ENCODE measurements at regions of chr1 and their contacts with region 1.

Region 1: DNA sequence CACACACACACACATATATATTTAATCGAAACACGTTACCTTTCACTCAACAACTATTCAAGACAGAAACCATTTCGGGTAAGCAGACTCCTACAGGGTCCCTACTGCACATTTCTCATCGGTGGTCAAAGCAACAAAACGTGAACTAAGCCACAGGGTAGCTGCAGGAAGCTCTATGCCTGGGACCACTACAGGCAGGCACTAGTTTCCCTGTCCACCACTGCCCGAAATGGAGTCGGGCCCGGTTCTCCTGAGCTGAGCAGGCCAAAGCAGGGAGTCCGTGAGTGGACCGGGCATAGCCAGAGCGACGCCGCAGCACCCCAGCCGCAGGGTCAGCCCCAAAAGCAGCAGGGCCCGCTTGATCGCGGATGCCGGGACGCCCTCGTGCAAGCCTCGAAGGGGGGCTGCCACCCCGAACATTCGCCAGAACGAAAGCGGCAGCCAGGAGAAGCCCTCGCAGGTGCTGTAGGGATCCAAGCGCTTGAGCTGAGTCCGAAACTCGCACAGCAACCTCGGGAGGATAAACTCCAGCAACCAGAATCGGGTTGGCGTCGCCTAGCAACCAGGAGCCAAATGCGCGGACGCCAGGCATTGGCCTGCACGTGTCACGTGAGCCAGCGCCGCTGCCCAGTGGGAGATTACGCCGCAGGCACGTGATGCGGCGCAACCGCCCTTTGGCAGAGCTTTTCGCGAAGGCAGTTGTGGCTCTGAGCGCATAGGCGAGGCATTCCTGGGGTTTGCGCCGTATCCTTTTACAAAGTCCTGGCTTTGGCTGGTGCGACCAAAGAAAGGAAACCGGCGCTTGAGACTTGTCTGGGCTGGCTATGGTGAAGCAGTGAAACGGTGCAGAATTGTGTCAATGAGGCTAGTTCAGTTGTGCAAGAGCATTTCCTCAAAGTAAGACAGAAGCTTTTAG is 13.9 kb upstream of the DDI2 start:
- DNase-seq: peak; percentile 97 to 98
- H3K4me3 ChIP-seq: peak overlapping the region; percentile 64 to 74
- H3K27ac ChIP-seq: peak overlapping the region; percentile 76 to 78
- H3K4me1 ChIP-seq: peaks cover 0 to 14% (median 5%) of the 10 kb centered on the region in 4 donors
- H3K27me3 ChIP-seq: no peaks in the 10 kb centered on the region
- CTCF ChIP-seq: peak in 1 of 2 experiments; percentile 23

Region 2: DNA sequence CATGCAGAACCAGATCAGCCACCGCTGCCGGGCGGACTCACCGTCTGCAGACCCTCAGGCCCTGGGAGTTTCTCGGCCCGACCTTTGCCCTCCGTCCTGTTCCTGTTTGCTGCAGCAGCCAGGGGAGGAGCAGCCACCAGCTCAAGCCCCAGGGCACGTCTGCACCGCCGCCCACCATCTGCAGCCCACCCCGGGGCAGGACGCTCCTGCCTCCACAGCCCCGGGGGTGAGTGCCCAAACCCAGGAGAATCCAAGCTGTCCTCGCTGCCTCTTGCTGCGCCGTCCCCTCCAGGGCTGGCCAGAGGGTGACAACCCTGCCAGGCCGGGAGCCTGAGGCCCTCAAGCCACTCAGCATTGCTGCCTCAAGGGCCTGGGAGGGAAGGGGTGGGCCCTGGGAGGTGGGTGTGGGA is 131.6 kb after region 1 on chr1:
- intact Hi-C with region 1: loop called (anchors 5 kb)
- DNase-seq: peak in 1 of 2 donors; percentile 70
- H3K4me3 ChIP-seq: no peak overlapping the region
- H3K27ac ChIP-seq: peak overlapping the region; percentile 28 to 68
- H3K4me1 ChIP-seq: peaks cover 0 to 37% (median 19%) of the 10 kb centered on the region in 4 donors
- H3K27me3 ChIP-seq: no peaks in the 10 kb centered on the region
- CTCF ChIP-seq: no peak

Region 3: GRCh38 chr1:15788624-15789301 is 185.5 kb after region 1 on chr1:
- intact Hi-C with region 1: no loop called
- DNase-seq: no peak
- H3K4me3 ChIP-seq: no peak overlapping the region
- H3K27ac ChIP-seq: peak overlapping the region; percentile 64 to 69
- H3K4me1 ChIP-seq: peaks cover 0 to 75% (median 28%) of the 10 kb centered on the region in 4 donors
- H3K27me3 ChIP-seq: no peaks in the 10 kb centered on the region
- CTCF ChIP-seq: no peak

Measured in tibial artery (tissue), 4 donors.